ENCODE measurements at regions of chr12 and their contacts with region 1.

Region 1: GRCh38 chr12:13962699-13963098 is 18.7 kb downstream of the GRIN2B start:
- DNase-seq: peak in 1 of 2 experiments; percentile 68
- H3K4me3 ChIP-seq: no peak overlapping the region
- H3K27ac ChIP-seq: no peak overlapping the region
- H3K4me1 ChIP-seq: peaks cover 0 to 13% (median 6%) of the 10 kb centered on the region in 4 experiments; a peak in 4 of 7 replicates
- H3K27me3 ChIP-seq: no peaks in the 10 kb centered on the region; a peak in 1 of 7 replicates
- CTCF ChIP-seq: peak; percentile 70 to 94 (median 91)
- EP300 ChIP-seq: no peak
- POLR2A ChIP-seq: no peak
- RAD21 ChIP-seq: peak; percentile 62 to 72

Region 2: GRCh38 chr12:13745111-13745685 is 217.5 kb before region 1 on chr12:
- CTCF ChIA-PET with region 1: interaction called, 10 read pairs
- POLR2A ChIA-PET with region 1: no interaction called
- DNase-seq: peak in 1 of 2 experiments; percentile 45
- H3K4me3 ChIP-seq: no peak overlapping the region
- H3K27ac ChIP-seq: no peak overlapping the region
- H3K4me1 ChIP-seq: peaks cover 5 to 28% (median 23%) of the 10 kb centered on the region in 4 experiments; a peak in 6 of 7 replicates
- H3K27me3 ChIP-seq: peaks cover 0 to 4% (median 0%) of the 10 kb centered on the region in 4 experiments; a peak in 3 of 7 replicates
- CTCF ChIP-seq: no peak
- EP300 ChIP-seq: no peak
- POLR2A ChIP-seq: no peak
- RAD21 ChIP-seq: no peak

Region 3: DNA sequence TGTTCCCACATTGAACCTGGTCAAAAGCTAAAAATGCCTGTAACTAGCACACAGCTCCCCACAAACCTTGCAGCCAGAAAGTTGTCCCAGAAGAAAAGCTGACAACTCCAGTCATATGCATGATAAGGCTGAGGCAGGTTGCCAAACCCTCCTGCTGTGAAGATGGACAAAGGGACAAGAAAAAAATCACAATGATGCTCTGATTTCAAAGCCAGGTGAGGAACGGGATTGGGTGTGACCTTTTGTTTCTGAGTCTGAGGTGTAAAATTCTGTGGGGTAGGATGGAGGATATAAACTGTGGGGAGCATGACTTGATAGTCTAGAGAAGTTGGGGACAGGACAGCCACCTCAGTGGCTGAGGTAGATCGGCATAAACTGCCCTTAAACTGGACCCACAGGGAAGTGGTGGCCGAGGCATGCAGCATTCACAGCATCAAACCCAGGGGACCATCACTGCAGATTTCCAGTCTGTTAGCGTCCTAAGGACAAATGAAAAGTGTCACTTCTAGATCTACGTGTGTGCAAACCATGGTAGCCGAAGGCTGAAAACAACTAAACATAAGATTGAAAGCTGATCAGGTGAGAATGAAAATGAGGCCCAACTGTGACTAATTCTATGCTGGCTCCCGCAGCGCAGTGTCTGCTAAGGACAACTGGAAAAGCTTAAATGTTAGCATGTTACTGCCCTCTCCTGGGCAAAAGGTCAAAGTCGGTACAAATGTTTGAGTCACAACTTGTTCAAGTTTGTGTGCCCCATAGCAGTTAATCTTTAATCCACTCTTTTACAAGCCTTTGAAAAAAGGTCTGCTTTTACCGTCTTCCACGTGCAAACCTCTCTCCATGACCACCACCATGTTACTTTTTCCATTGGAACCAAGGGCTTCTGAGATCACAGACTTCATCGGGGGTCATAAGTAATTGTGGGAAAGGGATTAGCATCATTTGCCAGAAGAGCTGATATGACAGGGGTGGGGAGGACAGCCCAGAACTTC is 21.1 kb before region 1 on chr12:
- CTCF ChIA-PET with region 1: interaction called, 12 read pairs
- POLR2A ChIA-PET with region 1: interaction called, 3 read pairs
- DNase-seq: peak; percentile 62 to 64
- H3K4me3 ChIP-seq: peak overlapping the region in 3 of 4 experiments; percentile 4 to 45 (median 20); a peak in 6 of 8 replicates
- H3K27ac ChIP-seq: no peak overlapping the region
- H3K4me1 ChIP-seq: peaks cover 6 to 21% (median 17%) of the 10 kb centered on the region in 4 experiments
- H3K27me3 ChIP-seq: no peaks in the 10 kb centered on the region
- CTCF ChIP-seq: peak; percentile 4 to 80 (median 71)
- EP300 ChIP-seq: no peak
- POLR2A ChIP-seq: no peak
- RAD21 ChIP-seq: peak; percentile 82 to 87

Region 4: GRCh38 chr12:13950502-13950901 is 12.2 kb before region 1 on chr12:
- CTCF ChIA-PET with region 1: interaction called, 13 read pairs
- POLR2A ChIA-PET with region 1: interaction called, 3 read pairs
- DNase-seq: no peak
- H3K4me3 ChIP-seq: no peak overlapping the region
- H3K27ac ChIP-seq: no peak overlapping the region
- H3K4me1 ChIP-seq: peaks cover 0 to 3% (median 0%) of the 10 kb centered on the region in 4 experiments; a peak in 2 of 7 replicates
- H3K27me3 ChIP-seq: no peaks in the 10 kb centered on the region
- CTCF ChIP-seq: no peak
- EP300 ChIP-seq: no peak
- POLR2A ChIP-seq: no peak
- RAD21 ChIP-seq: no peak

Region 5: DNA sequence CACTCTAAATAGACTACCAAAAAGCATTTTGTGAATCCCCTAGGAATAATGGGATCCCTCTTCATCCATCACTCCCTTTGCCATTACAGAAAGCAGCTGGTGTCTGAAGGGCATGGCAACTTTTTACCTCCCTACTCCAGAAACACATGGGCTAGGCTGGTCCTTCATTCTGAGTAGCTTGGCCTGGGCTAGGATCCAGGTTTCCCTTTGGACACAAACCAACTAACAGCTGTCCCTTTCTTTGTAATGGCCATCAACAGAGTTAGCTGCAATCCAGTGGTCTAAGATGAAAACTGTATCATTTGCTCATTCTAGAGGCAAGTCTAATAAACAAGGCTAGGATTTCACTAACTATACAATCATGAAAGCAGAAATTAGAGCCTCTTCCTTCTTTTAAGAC is 11.3 kb after region 1 on chr12:
- CTCF ChIA-PET with region 1: interaction called, 25 read pairs
- POLR2A ChIA-PET with region 1: interaction called, 3 read pairs
- DNase-seq: no peak
- H3K4me3 ChIP-seq: no peak overlapping the region
- H3K27ac ChIP-seq: no peak overlapping the region
- H3K4me1 ChIP-seq: peaks cover 0 to 15% (median 5%) of the 10 kb centered on the region in 4 experiments; a peak in 2 of 7 replicates
- H3K27me3 ChIP-seq: peaks cover 0 to 5% (median 2%) of the 10 kb centered on the region in 4 experiments; a peak in 3 of 7 replicates
- CTCF ChIP-seq: no peak
- EP300 ChIP-seq: no peak
- POLR2A ChIP-seq: no peak
- RAD21 ChIP-seq: no peak

Region 6: DNA sequence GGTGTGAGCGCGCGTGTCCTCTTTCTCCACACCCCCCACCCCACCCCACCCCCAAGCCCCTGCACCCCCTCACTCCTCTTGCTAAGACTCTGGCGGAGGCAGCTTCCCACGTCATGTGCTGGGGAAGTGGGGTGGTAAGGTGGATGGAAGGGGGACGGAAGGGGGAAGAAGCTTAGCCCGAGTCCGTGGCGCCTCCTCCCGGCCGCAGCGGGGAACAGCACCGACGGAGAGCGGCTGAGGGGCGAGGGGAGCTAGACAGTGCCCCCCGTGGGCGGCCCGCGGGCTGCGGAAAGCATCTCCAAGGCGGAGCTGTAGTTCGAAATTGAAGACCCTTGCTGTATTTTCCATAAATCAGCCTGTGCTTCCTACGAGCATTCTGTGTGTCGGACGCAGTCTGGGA is 19.3 kb after region 1 on chr12:
- CTCF ChIA-PET with region 1: interaction called, 25 read pairs
- POLR2A ChIA-PET with region 1: interaction called, 3 read pairs
- DNase-seq: peak in 1 of 2 experiments; percentile 96
- H3K4me3 ChIP-seq: peak overlapping the region; percentile 66 to 89 (median 81)
- H3K27ac ChIP-seq: no peak overlapping the region
- H3K4me1 ChIP-seq: no peaks in the 10 kb centered on the region; a peak in 2 of 7 replicates
- H3K27me3 ChIP-seq: peaks cover 8 to 36% (median 25%) of the 10 kb centered on the region in 4 experiments
- CTCF ChIP-seq: peak; percentile 87 to 99 (median 95)
- EP300 ChIP-seq: no peak
- POLR2A ChIP-seq: no peak
- RAD21 ChIP-seq: peak; percentile 84 to 86

Region 7: GRCh38 chr12:14153803-14154202 is 191.1 kb after region 1 on chr12:
- CTCF ChIA-PET with region 1: no interaction called
- POLR2A ChIA-PET with region 1: no interaction called
- DNase-seq: no peak
- H3K4me3 ChIP-seq: no peak overlapping the region
- H3K27ac ChIP-seq: no peak overlapping the region
- H3K4me1 ChIP-seq: peaks cover 0 to 3% (median 2%) of the 10 kb centered on the region in 4 experiments; a peak in 2 of 7 replicates
- H3K27me3 ChIP-seq: no peaks in the 10 kb centered on the region
- CTCF ChIP-seq: no peak
- EP300 ChIP-seq: no peak
- POLR2A ChIP-seq: no peak
- RAD21 ChIP-seq: no peak

Region 8: GRCh38 chr12:14417715-14418114 is 455.0 kb after region 1 on chr12:
- CTCF ChIA-PET with region 1: no interaction called
- POLR2A ChIA-PET with region 1: no interaction called
- DNase-seq: peak; percentile 64 to 72
- H3K4me3 ChIP-seq: peak overlapping the region in 1 of 4 experiments; percentile 36; a peak in 1 of 8 replicates
- H3K27ac ChIP-seq: peak overlapping the region; percentile 32; the same call in 1 of the 2 replicates
- H3K4me1 ChIP-seq: peaks cover 0 to 12% (median 4%) of the 10 kb centered on the region in 4 experiments; a peak in 2 of 7 replicates
- H3K27me3 ChIP-seq: no peaks in the 10 kb centered on the region
- CTCF ChIP-seq: no peak
- EP300 ChIP-seq: no peak
- POLR2A ChIP-seq: no peak
- RAD21 ChIP-seq: no peak